Heart left ventricle (tissue), 16 donors: ENCODE measurements at regions of chr9 and their contacts with region 1.

Region 1: GRCh38 chr9:108282872-108283271 is 572.9 kb downstream of the ACTL7B start:
- DNase-seq: no peak
- ATAC-seq: no peak
- H3K4me3 ChIP-seq: no peak overlapping the region
- H3K27ac ChIP-seq: no peak overlapping the region
- H3K4me1 ChIP-seq: no peaks in the 10 kb centered on the region
- H3K27me3 ChIP-seq: no peaks in the 10 kb centered on the region
- CTCF ChIP-seq: peak in 4 of 12 donors; percentile 9 to 23 (median 14)
- POLR2A ChIP-seq: no peak

Region 2: DNA sequence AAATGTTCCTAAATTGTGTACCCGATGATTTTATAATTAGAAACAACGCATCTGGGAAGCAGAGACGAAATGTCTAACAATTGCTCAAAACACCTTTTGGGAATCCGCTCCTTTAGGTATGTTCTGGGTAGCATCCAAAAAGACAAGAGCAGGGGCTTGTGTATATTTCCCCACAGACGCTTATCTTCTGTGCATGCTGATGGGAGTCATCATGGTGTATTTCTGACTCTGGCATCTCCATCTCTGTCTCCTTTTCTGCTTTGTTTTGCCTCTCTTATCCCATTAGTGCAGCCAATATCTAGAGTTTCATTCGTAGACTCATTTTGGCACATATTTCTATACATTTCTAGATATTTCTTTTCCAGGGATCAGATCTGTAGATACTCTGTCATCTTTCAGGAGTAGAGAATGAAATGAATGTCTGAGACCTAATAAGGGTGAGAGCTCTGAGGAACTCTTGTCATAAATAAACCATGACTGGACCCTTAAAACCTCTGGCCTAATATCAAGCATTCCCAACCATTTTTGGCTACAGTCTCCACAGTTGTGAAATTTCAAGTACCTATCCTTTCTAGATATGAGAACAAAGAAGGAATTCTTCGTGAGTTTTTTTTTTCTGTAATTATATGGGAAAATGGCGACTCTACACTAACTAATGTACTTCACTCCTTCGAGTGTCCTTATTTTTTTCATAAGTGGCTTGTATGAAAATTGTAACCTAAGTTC is 64.8 kb after region 1 on chr9:
- intact Hi-C with region 1: loop called in 1 of 10 experiments (anchors 10 kb)
- DNase-seq: no peak
- ATAC-seq: peak in 2 of 4 donors; percentile 53 to 71
- H3K4me3 ChIP-seq: no peak overlapping the region
- H3K27ac ChIP-seq: peak overlapping the region in 1 of 12 donors; percentile 11
- H3K4me1 ChIP-seq: no peaks in the 10 kb centered on the region
- H3K27me3 ChIP-seq: no peaks in the 10 kb centered on the region
- CTCF ChIP-seq: no peak
- POLR2A ChIP-seq: no peak